ENCODE measurements at regions of chr7 and their contacts with region 1.

Region 1: DNA sequence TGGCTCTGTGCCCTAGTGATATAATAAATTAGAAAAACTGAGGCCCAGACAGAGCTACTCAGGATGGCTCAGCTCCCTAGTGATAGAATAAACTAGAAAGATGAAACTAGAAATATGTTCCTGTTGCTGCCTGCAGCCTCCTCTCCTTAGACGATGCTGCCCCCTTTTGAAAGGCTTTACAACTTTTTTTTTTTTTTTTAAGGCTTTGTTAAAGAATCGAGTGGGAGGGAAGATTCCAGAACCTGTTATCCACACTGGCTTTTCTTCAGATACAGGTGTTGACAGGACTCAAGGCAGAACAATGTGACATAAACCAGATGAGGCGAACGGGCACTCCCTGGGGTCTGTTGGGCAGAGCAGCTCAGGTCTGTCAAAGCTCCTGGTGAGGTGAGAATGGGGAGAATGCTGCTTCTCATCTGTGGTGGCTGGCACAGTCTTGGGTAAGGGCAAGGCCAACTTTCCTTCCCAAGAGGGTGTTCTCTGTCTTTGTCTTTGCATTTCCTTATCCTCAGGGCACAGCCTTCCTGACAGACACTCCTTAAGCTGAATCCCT is 175.1 kb downstream of the COBL start:
- DNase-seq: no peak
- ATAC-seq: peak; percentile 77 to 78
- H3K4me3 ChIP-seq: no peak overlapping the region
- H3K27ac ChIP-seq: peak overlapping the region; percentile 60
- H3K4me1 ChIP-seq: peaks cover 2% of the 10 kb centered on the region
- H3K27me3 ChIP-seq: no peaks in the 10 kb centered on the region

Region 2: GRCh38 chr7:50206453-50207250 is 934.9 kb before region 1 on chr7:
- intact Hi-C with region 1: loop called in 1 of 4 experiments (anchors 10 kb)
- DNase-seq: no peak
- ATAC-seq: peak; percentile 31 to 58
- H3K4me3 ChIP-seq: no peak overlapping the region
- H3K27ac ChIP-seq: no peak overlapping the region
- H3K4me1 ChIP-seq: no peaks in the 10 kb centered on the region
- H3K27me3 ChIP-seq: no peaks in the 10 kb centered on the region

Region 3: GRCh38 chr7:50475340-50475739 is 666.2 kb before region 1 on chr7:
- intact Hi-C with region 1: loop called in 1 of 4 experiments (anchors 10 kb)
- DNase-seq: no peak
- ATAC-seq: no peak
- H3K4me3 ChIP-seq: no peak overlapping the region
- H3K27ac ChIP-seq: no peak overlapping the region
- H3K4me1 ChIP-seq: no peaks in the 10 kb centered on the region
- H3K27me3 ChIP-seq: no peaks in the 10 kb centered on the region

Region 4: DNA sequence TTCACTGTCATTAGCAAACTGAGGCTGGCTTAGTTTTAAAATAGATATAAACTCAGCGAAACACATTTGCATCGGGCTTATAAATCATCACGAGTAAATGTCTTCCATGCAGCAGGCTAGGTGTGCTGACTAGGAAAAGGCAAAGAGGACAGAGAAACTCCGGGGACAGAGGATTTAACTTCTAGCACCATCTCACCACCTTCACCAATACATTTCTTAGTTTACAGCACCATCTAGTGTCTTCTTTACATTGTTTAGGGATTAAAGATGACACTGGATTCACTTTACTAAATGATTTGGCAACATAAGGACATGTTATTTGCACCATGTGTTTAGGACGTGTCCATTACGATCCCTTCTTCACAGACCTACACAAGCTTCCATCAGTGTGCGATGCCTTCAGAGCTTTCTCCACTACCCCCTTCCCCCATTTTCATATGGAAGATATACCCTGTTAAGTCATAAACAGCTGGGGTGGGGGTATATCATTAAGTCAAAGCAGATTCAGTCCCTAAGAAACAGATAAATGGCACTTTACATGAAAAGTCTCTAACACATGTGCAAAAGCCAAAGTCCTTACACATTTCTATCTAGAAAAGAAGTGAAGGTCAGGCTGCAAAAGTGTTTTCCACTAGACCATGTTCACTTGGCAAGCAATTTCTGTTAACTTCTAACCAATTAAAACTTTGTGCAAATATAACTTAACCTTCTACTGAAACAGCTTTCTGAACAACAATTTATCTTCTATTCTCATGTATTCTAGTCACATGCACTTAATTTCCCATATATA is 462.1 kb before region 1 on chr7:
- intact Hi-C with region 1: loop called in 1 of 4 experiments (anchors 10 kb)
- DNase-seq: no peak
- ATAC-seq: peak; percentile 62 to 67
- H3K4me3 ChIP-seq: no peak overlapping the region
- H3K27ac ChIP-seq: peak overlapping the region; percentile 61
- H3K4me1 ChIP-seq: peaks cover 15% of the 10 kb centered on the region
- H3K27me3 ChIP-seq: no peaks in the 10 kb centered on the region

Region 5: DNA sequence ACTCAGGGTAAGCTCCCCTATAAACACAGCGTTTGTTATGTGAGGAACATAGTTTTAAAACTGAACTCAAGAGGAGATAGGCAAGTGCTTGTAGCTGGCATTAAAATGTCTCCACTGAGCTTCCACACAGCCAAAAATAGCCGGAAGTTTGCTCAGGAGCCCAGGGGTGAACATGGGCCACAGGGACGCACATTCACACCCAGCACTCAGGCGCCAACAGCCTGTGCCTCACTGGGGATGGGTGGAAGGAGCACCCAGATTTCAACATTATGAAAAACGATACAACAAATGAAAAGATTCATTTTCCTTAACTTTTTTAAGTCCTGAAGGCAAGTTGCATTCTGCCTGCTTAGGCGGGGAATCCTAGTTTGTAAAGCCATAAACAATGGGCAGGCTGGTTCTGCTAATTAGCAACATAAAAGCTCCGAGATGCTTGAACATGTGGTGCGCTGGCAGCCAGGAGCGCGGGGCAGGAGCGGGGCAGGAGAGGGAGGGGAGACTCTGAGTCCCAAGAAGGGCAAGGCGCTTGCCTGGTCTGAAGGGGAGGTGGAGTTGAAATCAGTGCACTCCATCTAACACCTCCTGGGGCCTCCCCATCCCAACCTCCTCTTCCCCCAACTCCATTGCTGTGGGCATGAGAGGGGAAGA is 60.8 kb before region 1 on chr7:
- intact Hi-C with region 1: loop called in 1 of 4 experiments (anchors 5 kb)
- DNase-seq: peak in 1 of 3 donors; percentile 58
- ATAC-seq: peak; percentile 42 to 54
- H3K4me3 ChIP-seq: no peak overlapping the region
- H3K27ac ChIP-seq: peak overlapping the region; percentile 79
- H3K4me1 ChIP-seq: peaks cover 13% of the 10 kb centered on the region
- H3K27me3 ChIP-seq: no peaks in the 10 kb centered on the region